B cell (primary cell): ENCODE measurements at regions of chr2 and their contacts with region 1.

Region 1: GRCh38 chr2:68751397-68752339 is 17.1 kb downstream of the ARHGAP25 start:
- DNase-seq: peak; percentile 93
- ATAC-seq: peak; percentile 95
- H3K4me3 ChIP-seq: peak overlapping the region in 3 of 5 experiments; percentile 8 to 51 (median 14)
- H3K4me3 Mint-ChIP-seq: peak overlapping the region; percentile 60
- H3K27ac ChIP-seq: peak overlapping the region; percentile 14 to 49
- H3K27ac Mint-ChIP-seq: peak overlapping the region; percentile 86
- H3K4me1 ChIP-seq: peaks cover 58 to 63% of the 10 kb centered on the region in 2 donors
- H3K4me1 Mint-ChIP-seq: peaks cover 75% of the 10 kb centered on the region
- H3K27me3 ChIP-seq: no peaks in the 10 kb centered on the region
- H3K27me3 Mint-ChIP-seq: no peaks in the 10 kb centered on the region
- CTCF ChIP-seq: peak; percentile 96

Region 2: GRCh38 chr2:68715353-68716041 is 36.2 kb before region 1 on chr2:
- CTCF ChIA-PET with region 1: interaction called, 280 read pairs
- POLR2A ChIA-PET with region 1: interaction called, 4 read pairs
- intact Hi-C with region 1: loop called (anchors 5 kb)
- DNase-seq: peak; percentile 70
- ATAC-seq: peak; percentile 37
- H3K4me3 ChIP-seq: peak overlapping the region in 1 of 5 experiments; percentile 17
- H3K4me3 Mint-ChIP-seq: peak overlapping the region; percentile 33
- H3K27ac ChIP-seq: peak overlapping the region; percentile 59 to 78
- H3K27ac Mint-ChIP-seq: peak overlapping the region; percentile 83
- H3K4me1 ChIP-seq: peaks cover 45 to 50% of the 10 kb centered on the region in 2 donors
- H3K4me1 Mint-ChIP-seq: peaks cover 69% of the 10 kb centered on the region
- H3K27me3 ChIP-seq: no peaks in the 10 kb centered on the region
- H3K27me3 Mint-ChIP-seq: no peaks in the 10 kb centered on the region
- CTCF ChIP-seq: peak; percentile 57

Region 3: DNA sequence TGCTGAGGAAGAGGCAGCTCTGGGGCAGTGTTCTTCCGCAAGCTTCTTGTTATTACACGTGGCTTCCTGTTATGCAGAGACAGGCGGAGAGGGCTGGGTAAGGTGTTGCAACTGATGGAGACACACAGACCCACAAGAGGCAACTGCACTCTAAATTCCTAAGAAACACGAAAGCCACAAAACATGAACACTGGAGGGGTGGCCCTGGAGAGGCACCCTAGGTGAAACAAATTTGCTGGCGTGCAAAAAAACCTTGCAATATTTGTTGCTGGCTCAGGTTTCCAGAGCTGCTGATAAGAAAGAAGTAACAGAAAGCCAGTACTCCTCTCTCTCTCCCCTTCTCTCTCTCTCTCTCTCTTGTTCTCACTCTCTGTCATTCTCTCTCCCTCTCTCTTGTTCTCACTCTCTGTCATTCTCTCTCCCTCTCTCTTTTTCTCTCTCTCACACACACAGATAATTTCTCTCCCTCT is 14.7 kb after region 1 on chr2:
- CTCF ChIA-PET with region 1: interaction called, 425 read pairs
- POLR2A ChIA-PET with region 1: interaction called, 9 read pairs
- intact Hi-C with region 1: loop called (anchors 1 kb)
- DNase-seq: peak; percentile 74
- ATAC-seq: peak; percentile 44
- H3K4me3 ChIP-seq: peak overlapping the region in 3 of 5 experiments; percentile 9 to 48 (median 16)
- H3K4me3 Mint-ChIP-seq: peak overlapping the region; percentile 80
- H3K27ac ChIP-seq: peak overlapping the region; percentile 93 to 99
- H3K27ac Mint-ChIP-seq: peak overlapping the region; percentile 98
- H3K4me1 ChIP-seq: peaks cover 97 to 100% of the 10 kb centered on the region in 2 donors
- H3K4me1 Mint-ChIP-seq: peaks cover 94% of the 10 kb centered on the region
- H3K27me3 ChIP-seq: no peaks in the 10 kb centered on the region
- H3K27me3 Mint-ChIP-seq: no peaks in the 10 kb centered on the region
- CTCF ChIP-seq: no peak

Region 4: GRCh38 chr2:68796294-68796905 is 44.7 kb after region 1 on chr2:
- CTCF ChIA-PET with region 1: interaction called, 22 read pairs
- POLR2A ChIA-PET with region 1: no interaction called
- intact Hi-C with region 1: loop called (anchors 5 kb)
- DNase-seq: peak; percentile 71
- ATAC-seq: peak; percentile 59
- H3K4me3 ChIP-seq: peak overlapping the region in 3 of 5 experiments; percentile 0 to 45 (median 1)
- H3K4me3 Mint-ChIP-seq: peak overlapping the region; percentile 79
- H3K27ac ChIP-seq: peak overlapping the region; percentile 67 to 96
- H3K27ac Mint-ChIP-seq: peak overlapping the region; percentile 94
- H3K4me1 ChIP-seq: peaks cover 63 to 68% of the 10 kb centered on the region in 2 donors
- H3K4me1 Mint-ChIP-seq: peaks cover 91% of the 10 kb centered on the region
- H3K27me3 ChIP-seq: no peaks in the 10 kb centered on the region
- H3K27me3 Mint-ChIP-seq: no peaks in the 10 kb centered on the region
- CTCF ChIP-seq: no peak

Region 5: GRCh38 chr2:68828887-68829708 is 77.4 kb after region 1 on chr2:
- CTCF ChIA-PET with region 1: interaction called, 140 read pairs
- POLR2A ChIA-PET with region 1: no interaction called
- intact Hi-C with region 1: no loop called
- DNase-seq: peak; percentile 60
- ATAC-seq: peak; percentile 21
- H3K4me3 ChIP-seq: no peak overlapping the region
- H3K4me3 Mint-ChIP-seq: peak overlapping the region; percentile 60
- H3K27ac ChIP-seq: peak overlapping the region; percentile 14 to 44
- H3K27ac Mint-ChIP-seq: peak overlapping the region; percentile 83
- H3K4me1 ChIP-seq: peaks cover 44 to 46% of the 10 kb centered on the region in 2 donors
- H3K4me1 Mint-ChIP-seq: peaks cover 67% of the 10 kb centered on the region
- H3K27me3 ChIP-seq: no peaks in the 10 kb centered on the region
- H3K27me3 Mint-ChIP-seq: no peaks in the 10 kb centered on the region
- CTCF ChIP-seq: no peak

Region 6: GRCh38 chr2:68925295-68925896 is 173.7 kb after region 1 on chr2:
- CTCF ChIA-PET with region 1: interaction called, 72 read pairs
- POLR2A ChIA-PET with region 1: no interaction called
- intact Hi-C with region 1: loop called (anchors 1 kb)
- DNase-seq: peak; percentile 76
- ATAC-seq: peak; percentile 56
- H3K4me3 ChIP-seq: no peak overlapping the region
- H3K4me3 Mint-ChIP-seq: no peak overlapping the region
- H3K27ac ChIP-seq: no peak overlapping the region
- H3K27ac Mint-ChIP-seq: no peak overlapping the region
- H3K4me1 ChIP-seq: no peaks in the 10 kb centered on the region
- H3K4me1 Mint-ChIP-seq: no peaks in the 10 kb centered on the region
- H3K27me3 ChIP-seq: no peaks in the 10 kb centered on the region
- H3K27me3 Mint-ChIP-seq: peaks cover 4% of the 10 kb centered on the region
- CTCF ChIP-seq: peak; percentile 95